ENCODE measurements at regions of chr1 and their contacts with region 1.

Region 1: DNA sequence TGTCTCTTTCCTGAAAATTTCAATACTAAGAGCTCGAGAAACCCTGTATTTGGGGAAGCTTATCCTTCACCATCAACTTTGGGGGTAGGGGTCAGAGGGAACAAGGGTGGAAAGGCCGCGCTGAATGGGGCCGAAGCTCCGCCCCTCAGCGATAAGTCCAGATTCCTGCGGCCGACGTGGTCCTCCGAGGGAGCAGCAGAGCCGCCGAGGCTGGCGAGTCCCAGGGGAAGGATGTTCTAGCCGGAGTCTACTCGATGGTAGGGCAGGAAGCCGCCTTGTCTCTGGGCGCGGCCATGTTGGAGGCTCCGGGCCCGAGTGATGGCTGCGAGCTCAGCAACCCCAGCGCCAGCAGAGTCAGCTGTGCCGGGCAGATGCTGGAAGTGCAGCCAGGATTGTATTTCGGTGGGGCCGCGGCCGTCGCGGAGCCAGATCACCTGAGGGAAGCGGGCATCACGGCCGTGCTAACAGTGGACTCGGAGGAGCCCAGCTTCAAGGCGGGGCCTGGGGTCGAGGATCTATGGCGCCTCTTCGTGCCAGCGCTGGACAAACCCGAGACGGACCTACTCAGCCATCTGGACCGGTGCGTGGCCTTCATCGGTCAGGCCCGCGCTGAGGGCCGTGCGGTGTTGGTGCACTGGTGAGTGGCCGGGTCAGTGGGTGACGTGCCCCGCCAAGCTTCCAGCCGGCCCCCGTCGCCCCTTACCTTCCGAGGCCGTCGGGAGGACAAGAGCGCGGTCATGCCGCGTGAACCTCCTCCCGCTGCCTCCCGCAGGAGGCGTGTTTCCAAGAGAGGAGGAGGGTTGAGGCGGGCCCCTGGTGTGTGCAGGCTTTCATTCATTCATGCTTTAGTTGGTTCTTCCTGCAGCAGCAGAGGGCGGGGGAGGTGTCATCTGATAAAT is at the start of gene DUSP12:
- DNase-seq: peak; percentile 84 to 91
- H3K4me3 ChIP-seq: peak within 1 kb of the TSS; percentile 78 to 93 (median 88)
- H3K27ac ChIP-seq: peak within 1 kb of the TSS; percentile 98
- H3K4me1 ChIP-seq: 0 out of 7 replicates have a peak, but pooled peaks cover 0 to 2% (median 0%) of the 10 kb centered on the region in 4 experiments
- H3K27me3 ChIP-seq: no peaks in the 10 kb centered on the region
- CTCF ChIP-seq: peak in 2 of 3 experiments; percentile 12 to 15; a peak in 2 of 4 replicates
- EP300 ChIP-seq: no peak
- POLR2A ChIP-seq: peak; percentile 90 to 97
- RAD21 ChIP-seq: no peak
- total RNA-seq, gene DUSP12: 24.4 and 27.6 TPM in 2 replicates

Region 2: GRCh38 chr1:161738627-161739287 is 11.0 kb before region 1 on chr1:
- CTCF ChIA-PET with region 1: interaction called, 22 read pairs
- POLR2A ChIA-PET with region 1: interaction called, 24 read pairs
- DNase-seq: no peak
- H3K4me3 ChIP-seq: no peak overlapping the region
- H3K27ac ChIP-seq: no peak overlapping the region
- H3K4me1 ChIP-seq: peaks cover 1 to 14% (median 4%) of the 10 kb centered on the region in 4 experiments; a peak in 4 of 7 replicates
- H3K27me3 ChIP-seq: no peaks in the 10 kb centered on the region
- CTCF ChIP-seq: peak in 2 of 3 experiments; percentile 61 to 72; a peak in 3 of 4 replicates
- EP300 ChIP-seq: no peak
- POLR2A ChIP-seq: no peak
- RAD21 ChIP-seq: peak; percentile 89 to 92

Region 3: GRCh38 chr1:161763522-161764098 is 13.9 kb after region 1 on chr1:
- CTCF ChIA-PET with region 1: interaction called, 6 read pairs
- POLR2A ChIA-PET with region 1: interaction called, 21 read pairs
- DNase-seq: no peak
- H3K4me3 ChIP-seq: no peak overlapping the region
- H3K27ac ChIP-seq: no peak overlapping the region
- H3K4me1 ChIP-seq: no peaks in the 10 kb centered on the region
- H3K27me3 ChIP-seq: no peaks in the 10 kb centered on the region
- CTCF ChIP-seq: peak in 2 of 3 experiments; percentile 54 to 69; a peak in 3 of 4 replicates
- EP300 ChIP-seq: no peak
- POLR2A ChIP-seq: no peak
- RAD21 ChIP-seq: peak; percentile 29 to 39; a peak in 3 of 4 replicates

Region 4: DNA sequence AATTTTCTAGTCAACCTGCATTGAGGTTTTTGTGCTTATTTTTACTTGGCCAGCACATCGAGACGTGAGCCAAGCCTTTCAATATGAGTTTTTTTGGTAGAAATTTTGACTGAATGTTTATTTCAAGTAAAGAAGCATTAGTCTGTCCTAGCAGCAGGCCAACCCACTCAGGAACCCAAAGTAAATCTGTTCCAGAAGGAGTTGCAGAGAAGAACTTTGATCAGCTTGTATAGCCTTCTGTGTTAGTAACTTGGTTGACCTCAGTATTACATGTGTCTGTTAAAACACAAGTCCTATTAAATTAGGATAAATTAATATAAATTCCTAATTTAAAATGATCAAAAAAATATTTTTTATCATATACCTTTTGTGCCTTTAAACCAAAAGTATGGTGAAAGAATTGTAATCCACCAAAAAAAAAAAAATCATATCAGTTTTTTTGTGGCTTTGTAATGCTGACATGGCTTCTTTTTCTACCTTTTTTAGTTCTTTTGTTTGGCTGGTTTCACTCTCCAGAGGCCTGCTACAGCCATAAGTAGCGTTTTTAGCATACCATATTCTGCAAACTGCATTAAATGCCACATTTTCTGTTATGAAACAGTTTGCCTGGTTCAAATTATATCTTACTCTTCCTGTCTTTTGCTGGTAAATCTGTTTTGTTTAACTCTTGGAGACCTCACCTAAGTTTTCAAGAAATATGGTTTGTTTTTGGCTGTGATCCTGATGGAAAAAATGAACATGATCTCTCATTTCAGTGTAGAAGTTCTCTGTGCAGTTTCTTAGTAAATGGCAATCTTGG is 55.8 kb after region 1 on chr1:
- CTCF ChIA-PET with region 1: no interaction called
- POLR2A ChIA-PET with region 1: no interaction called
- DNase-seq: no peak
- H3K4me3 ChIP-seq: no peak overlapping the region
- H3K27ac ChIP-seq: no peak overlapping the region
- H3K4me1 ChIP-seq: peaks cover 0 to 4% (median 0%) of the 10 kb centered on the region in 4 experiments; a peak in 1 of 7 replicates
- H3K27me3 ChIP-seq: no peaks in the 10 kb centered on the region
- CTCF ChIP-seq: no peak
- EP300 ChIP-seq: no peak
- POLR2A ChIP-seq: no peak
- RAD21 ChIP-seq: no peak

Region 5: DNA sequence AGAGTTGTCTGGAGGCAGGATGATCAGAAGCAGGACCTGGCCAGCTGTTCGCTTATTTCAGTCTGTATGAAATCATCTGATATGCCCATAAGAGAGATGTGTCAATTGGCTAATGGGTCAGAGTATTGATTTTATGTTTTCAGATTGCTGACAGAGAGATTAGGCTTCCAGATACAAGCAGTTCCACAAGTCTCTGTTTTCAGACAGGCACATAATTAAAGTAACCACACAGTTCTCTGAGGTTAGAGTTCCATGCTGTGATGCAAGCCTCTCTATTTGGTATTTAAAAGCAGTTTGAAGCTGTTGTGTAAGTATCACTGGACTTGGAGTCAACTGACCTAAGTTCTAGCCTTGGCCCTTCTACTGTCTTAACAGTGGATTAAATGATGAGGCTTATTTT is 66.4 kb after region 1 on chr1:
- CTCF ChIA-PET with region 1: no interaction called
- POLR2A ChIA-PET with region 1: no interaction called
- DNase-seq: no peak
- H3K4me3 ChIP-seq: no peak overlapping the region
- H3K27ac ChIP-seq: no peak overlapping the region
- H3K4me1 ChIP-seq: no peaks in the 10 kb centered on the region
- H3K27me3 ChIP-seq: no peaks in the 10 kb centered on the region
- CTCF ChIP-seq: no peak
- EP300 ChIP-seq: no peak
- POLR2A ChIP-seq: no peak
- RAD21 ChIP-seq: no peak